RWPE1 (cell line): ENCODE measurements at regions of chr17 and their contacts with region 1.

Region 1: GRCh38 chr17:27654654-27655524 is 23.9 kb downstream of the LGALS9 start:
- DNase-seq: peak; percentile 75
- H3K27ac ChIP-seq: no peak overlapping the region
- CTCF ChIP-seq: peak; percentile 87

Region 2: DNA sequence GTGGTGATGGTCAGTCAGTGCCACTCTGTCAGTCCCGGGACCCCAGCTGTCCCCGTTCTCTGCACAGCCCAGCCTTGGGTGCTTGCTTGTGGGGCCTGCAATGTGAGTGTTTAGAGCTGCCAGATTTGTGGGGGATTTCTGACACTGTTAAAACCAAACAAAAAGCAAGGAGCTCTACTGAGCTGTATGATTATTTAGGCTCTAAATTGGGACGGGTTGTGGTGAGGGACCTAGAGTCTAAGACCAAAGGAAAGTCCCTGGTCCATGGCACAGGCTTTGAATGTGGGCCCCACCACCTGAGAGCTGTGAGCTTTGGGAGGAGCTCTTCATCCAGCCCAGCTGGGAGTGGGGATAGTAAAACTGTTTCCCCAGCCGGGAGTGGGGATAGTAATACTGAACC is 135.3 kb before region 1 on chr17:
- CTCF ChIA-PET with region 1: no interaction called
- POLR2A ChIA-PET with region 1: no interaction called
- DNase-seq: no peak
- H3K27ac ChIP-seq: peak overlapping the region; percentile 67
- CTCF ChIP-seq: no peak

Region 3: GRCh38 chr17:27609611-27610303 is 45.1 kb before region 1 on chr17:
- CTCF ChIA-PET with region 1: interaction called, 12 read pairs
- POLR2A ChIA-PET with region 1: no interaction called
- DNase-seq: peak; percentile 34
- H3K27ac ChIP-seq: no peak overlapping the region
- CTCF ChIP-seq: peak; percentile 24; the same call in 1 of the 2 replicates

Region 4: DNA sequence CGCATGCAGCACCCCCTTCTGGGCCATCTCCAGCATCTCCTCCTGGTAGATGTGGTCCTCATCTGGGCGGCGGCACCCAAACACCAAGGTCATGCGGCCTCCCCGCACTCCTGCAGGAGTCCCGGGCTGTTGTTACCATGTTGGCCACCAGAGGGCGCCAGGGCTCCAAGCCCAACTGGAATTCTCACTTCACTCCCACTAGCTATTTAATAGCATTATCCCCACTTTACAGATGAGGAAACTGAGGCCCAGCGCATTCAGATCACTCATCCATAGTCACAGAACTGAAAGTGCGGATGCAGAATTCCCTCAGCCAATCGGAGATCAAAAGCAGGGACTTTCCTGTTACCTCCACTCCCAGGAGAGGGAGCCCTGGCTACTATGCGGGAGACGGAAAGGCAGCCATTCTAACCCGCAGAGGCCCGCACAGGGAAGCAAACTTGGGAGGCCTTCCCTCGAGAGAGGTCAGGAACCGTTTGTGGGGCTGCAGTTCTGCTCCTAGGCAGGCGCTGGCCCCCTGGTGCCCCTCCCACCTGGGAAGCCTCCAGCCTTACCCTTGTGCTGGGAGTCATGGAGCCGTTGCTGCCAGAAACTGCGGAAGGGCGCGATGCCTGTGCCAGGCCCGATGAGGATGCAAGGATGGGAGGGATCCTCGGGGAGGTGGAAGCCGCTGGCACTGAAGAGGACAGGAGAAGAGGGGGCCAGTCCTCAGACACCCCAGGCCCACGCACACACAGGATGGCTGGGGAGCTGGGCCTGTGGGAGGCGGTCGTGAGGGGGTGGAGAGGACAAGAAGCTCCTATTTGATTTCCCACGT is 105.4 kb after region 1 on chr17:
- CTCF ChIA-PET with region 1: interaction called, 36 read pairs
- POLR2A ChIA-PET with region 1: no interaction called
- DNase-seq: peak; percentile 33
- H3K27ac ChIP-seq: no peak overlapping the region
- CTCF ChIP-seq: peak; percentile 90